ENCODE measurements at regions of chr11 and their contacts with region 1.

Region 1: GRCh38 chr11:68870470-68870869 is 28.8 kb upstream of the CPT1A start:
- DNase-seq: no peak
- H3K4me3 ChIP-seq: peak overlapping the region; percentile 33 to 52 (median 44)
- H3K27ac ChIP-seq: peak overlapping the region in 1 of 4 donors; percentile 43
- H3K4me1 ChIP-seq: peaks cover 0 to 15% (median 11%) of the 10 kb centered on the region in 4 donors
- H3K27me3 ChIP-seq: peaks cover 0 to 2% (median 0%) of the 10 kb centered on the region in 3 donors
- CTCF ChIP-seq: no peak
- EP300 ChIP-seq: no peak
- POLR2A ChIP-seq: no peak

Region 2: DNA sequence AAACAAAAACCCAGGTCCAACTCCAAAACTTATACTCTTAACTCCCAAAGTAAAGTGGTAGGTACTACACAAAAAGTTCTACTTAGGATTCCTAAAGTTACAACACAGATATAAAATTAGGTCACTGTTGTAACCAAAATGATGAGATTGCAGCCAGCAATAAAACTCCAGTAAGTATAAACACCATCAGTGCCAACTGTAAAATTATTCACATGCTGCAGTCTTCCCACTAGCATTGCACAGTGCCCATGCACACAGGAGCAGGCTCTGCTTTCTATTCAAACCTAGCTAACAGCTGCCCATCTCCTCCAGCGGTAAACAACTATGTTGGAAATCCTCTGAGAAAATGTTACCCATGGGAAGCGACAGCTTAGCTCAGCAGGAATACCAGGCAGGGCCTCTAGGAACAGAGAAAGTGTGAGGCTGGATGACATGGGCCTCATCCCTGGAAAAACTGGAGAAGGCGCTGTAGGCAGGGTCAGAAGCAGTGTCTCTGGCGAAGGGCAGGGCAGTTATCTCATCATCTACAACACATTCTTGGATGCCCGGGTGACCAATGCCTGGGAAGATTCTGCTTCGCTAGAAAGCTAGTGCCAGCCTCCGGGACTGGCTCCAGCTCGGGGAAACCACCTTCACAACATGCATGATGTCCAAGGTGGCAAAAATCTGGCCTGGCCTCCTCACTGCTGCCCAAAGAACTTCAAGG is 37.8 kb before region 1 on chr11:
- intact Hi-C with region 1: loop called (anchors 5 kb)
- DNase-seq: no peak
- H3K4me3 ChIP-seq: no peak overlapping the region
- H3K27ac ChIP-seq: peak overlapping the region; percentile 48 to 76 (median 64)
- H3K4me1 ChIP-seq: peaks cover 0 to 96% (median 77%) of the 10 kb centered on the region in 4 donors
- H3K27me3 ChIP-seq: no peaks in the 10 kb centered on the region
- CTCF ChIP-seq: no peak
- EP300 ChIP-seq: no peak
- POLR2A ChIP-seq: no peak

Measured in sigmoid colon (tissue), 7 donors.